ENCODE measurements at regions of chr13 and their contacts with region 1.

Region 1: DNA sequence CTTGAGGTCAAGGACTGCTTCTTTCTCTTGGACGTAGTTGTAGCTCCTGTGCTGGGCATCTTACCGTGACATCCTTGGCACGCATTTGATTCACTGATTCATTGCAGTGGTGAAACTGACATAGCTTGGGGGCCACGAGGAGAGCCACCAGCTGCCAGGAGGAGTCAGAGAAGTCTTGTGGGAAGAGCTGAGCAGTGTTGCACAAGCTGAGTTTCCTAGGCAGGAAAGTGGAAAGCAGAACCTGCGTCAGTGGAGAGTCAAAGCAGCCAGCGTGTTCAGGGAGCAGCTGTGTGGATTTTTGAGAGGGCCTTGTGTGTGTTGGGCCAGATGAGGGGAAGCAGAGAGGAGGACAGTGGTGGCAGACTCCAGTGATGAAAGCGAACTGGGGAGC is 5.3 kb upstream of the GPR183 start:
- DNase-seq: no peak
- H3K4me3 ChIP-seq: no peak overlapping the region
- H3K27ac ChIP-seq: peak overlapping the region in 6 of 8 donors; percentile 56 to 84 (median 80)
- H3K4me1 ChIP-seq: peaks cover 46 to 97% (median 78%) of the 10 kb centered on the region in 6 donors
- H3K27me3 ChIP-seq: no peaks in the 10 kb centered on the region
- CTCF ChIP-seq: no peak
- POLR2A ChIP-seq: no peak

Region 2: DNA sequence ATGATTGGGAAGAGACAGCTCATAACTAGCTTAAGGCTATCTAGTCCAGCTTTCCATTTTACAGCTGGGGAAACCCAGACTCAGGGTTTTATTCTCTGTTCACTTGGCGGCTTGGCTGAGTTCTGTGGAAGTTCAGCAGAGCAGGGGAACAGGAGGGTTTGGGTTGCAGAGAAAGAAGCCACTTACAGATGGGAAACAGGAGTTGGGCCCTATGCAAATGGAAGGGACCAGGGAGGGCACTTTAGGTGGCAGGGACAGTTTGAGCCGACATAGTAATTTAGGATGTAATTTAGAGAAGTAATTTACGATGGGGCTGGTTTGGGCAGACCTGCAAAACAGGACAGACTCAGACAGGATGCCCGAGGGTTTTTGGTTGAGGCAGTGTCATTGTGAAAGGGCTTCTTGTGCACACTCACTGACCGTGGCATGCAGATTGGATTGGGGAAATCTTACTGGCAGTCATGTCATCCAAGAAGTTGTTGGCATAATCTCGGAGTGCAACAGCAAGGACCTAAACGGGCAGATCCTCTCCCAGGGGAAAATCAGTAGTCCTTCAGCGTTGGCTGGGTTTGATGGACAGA is 42.0 kb after region 1 on chr13:
- intact Hi-C with region 1: loop called (anchors 5 kb)
- DNase-seq: no peak
- H3K4me3 ChIP-seq: no peak overlapping the region
- H3K27ac ChIP-seq: peak overlapping the region; percentile 86 to 92 (median 88)
- H3K4me1 ChIP-seq: peaks cover 51 to 94% (median 82%) of the 10 kb centered on the region in 6 donors
- H3K27me3 ChIP-seq: no peaks in the 10 kb centered on the region
- CTCF ChIP-seq: no peak
- POLR2A ChIP-seq: no peak

Measured in spleen (tissue), 13 donors.